Activated naive CD8-positive, alpha-beta T cell treated with anti-CD3 and anti-CD28 coated beads, Interleukin-2, amount 10 ng/mL, durations not matched to agents 7 days and 5 days (primary cell): ENCODE measurements at regions of chr17 and their contacts with region 1.

Region 1: DNA sequence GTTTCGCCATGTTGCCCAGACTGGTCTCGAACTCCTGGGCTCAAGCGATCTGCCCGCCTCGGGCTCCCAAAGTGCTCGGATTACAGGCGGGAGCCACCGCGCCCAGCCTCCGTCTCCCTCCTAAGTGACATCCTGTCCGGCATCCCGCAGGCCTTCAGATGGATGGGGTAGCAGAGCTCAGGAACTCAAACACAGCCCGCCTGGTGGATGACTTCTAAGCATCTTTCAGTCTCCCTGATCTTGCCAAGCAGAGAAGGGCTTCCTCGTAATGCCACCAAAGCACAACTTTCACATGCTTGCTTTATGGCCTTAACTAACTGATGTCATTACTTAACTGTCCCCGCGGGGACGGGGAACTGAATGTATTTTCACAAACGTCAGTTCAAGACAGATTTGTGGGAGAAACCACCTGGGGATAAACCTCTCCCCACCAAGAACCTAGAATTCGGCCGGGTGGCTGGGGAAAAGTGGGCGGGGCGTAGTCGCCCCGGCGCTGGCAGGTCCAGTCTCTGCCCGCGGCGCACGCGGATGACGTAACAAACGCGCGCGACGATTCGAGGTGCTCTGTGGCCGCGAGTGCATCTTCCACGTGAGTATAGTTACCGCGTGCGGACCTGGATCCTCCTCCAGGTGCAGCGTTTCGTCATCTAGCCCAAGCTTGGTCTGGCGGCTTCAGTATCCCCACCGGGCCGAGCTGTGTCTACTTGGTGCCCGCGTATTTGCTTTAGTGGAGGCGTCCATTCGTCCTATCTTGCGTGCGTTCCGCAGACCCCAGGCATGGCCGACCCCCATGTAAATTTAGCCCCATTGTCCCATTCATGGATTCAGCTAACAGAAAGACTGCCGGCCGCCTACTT is at the start of gene PFAS:
- DNase-seq: peak; percentile 99
- ATAC-seq: peak; percentile 68
- H3K4me3 Mint-ChIP-seq: peak within 1 kb of the TSS; percentile 99
- H3K27ac Mint-ChIP-seq: peak within 1 kb of the TSS; percentile 99
- H3K4me1 Mint-ChIP-seq: peaks cover 30% of the 10 kb centered on the region
- H3K27me3 Mint-ChIP-seq: no peaks in the 10 kb centered on the region
- total RNA-seq, gene PFAS: 47.2 to 56.8 TPM

Region 2: DNA sequence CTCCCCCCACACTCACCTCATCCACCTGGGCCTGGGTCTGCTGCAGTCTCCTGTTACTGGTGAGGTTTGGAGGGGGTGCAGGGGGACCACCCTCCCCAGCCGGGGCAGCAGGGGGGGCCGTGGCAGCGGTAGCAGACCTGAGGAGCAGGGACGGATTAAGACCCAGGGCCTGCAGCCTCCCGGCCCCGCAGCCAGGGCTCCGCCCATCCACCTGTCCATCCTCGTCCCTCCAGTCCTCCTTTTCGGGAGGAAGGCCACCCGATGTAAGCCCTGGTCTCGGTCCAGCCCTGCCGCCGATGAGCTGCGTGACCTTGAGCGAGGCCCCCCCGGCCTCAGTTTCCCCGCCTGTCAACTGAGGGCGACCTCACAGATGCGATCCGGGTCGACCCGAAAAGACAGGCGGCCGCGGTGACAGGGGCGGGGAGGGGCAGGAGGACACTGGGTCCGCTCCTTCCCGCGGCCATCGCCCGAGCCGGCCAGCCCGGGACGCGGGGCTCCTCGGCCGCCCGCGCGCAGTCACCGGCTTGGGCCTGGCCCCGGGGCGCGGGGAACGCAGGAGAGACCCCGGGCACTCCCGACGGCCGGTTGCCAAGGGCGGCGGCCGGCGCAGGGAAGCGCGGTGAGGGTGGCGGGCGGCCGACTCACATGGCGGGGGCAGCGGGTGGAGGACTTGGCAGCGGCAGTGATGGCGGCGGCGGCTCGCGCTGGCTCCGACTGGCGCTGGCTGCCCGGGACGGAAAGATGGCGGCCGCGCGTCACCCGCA is 86.6 kb before region 1 on chr17 and contains the start of gene VAMP2:
- POLR2A ChIA-PET with region 1: interaction called, 11 read pairs
- DNase-seq: peak; percentile 95
- ATAC-seq: peak; percentile 41
- H3K4me3 Mint-ChIP-seq: peak within 1 kb of the TSS; percentile 88
- H3K27ac Mint-ChIP-seq: peak within 1 kb of the TSS; percentile 100
- H3K4me1 Mint-ChIP-seq: peaks cover 47% of the 10 kb centered on the region
- H3K27me3 Mint-ChIP-seq: no peaks in the 10 kb centered on the region
- total RNA-seq, gene VAMP2: 116 to 118 TPM

Region 3: DNA sequence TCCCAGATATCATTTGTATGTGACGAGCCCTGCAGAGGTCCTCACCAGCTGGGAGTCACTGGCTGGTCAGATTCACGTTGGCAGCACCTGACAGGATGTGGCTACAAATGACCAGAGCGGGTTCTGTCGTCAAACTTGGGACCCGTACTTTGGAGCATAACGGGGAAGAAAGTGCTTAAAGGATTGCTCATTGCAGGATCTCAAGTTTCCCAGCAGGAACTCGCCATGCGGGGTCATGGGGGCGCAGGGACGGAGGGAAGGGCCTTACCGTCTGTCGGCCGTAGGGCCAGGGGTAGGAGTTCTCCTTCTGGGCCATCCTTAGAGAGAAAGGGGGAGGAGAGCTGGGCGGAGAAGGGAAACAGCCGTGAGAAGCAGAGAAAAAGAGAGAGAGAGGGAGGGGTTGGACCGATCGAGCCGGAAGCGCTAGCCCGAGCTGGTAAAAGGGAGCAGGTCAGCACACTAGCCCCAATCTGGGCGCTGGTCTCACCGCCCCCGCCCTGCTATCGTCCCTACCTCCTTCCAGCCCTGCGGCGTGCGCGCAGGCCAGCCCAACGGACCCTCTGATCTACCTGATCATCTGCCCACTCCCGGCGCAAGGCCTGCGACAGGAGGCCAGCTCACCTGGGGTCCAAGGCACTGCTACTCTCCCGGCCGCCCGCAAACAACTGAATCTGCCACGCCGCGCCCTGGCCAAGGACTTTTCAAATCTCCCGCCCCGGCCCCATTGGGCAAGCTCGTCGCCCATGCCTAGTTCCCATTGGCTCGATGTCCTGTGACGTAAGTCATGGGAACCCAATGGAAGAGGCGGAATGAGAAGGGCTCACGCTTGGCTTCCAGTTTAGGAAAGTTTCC is 38.8 kb before region 1 on chr17 and contains the start of gene AURKB:
- POLR2A ChIA-PET with region 1: interaction called, 12 read pairs
- DNase-seq: peak; percentile 87
- ATAC-seq: peak; percentile 97
- H3K4me3 Mint-ChIP-seq: peak within 1 kb of the TSS; percentile 96
- H3K27ac Mint-ChIP-seq: peak within 1 kb of the TSS; percentile 92
- H3K4me1 Mint-ChIP-seq: peaks cover 27% of the 10 kb centered on the region
- H3K27me3 Mint-ChIP-seq: peaks cover 3% of the 10 kb centered on the region
- total RNA-seq, gene AURKB: 128 to 152 TPM

Region 4: DNA sequence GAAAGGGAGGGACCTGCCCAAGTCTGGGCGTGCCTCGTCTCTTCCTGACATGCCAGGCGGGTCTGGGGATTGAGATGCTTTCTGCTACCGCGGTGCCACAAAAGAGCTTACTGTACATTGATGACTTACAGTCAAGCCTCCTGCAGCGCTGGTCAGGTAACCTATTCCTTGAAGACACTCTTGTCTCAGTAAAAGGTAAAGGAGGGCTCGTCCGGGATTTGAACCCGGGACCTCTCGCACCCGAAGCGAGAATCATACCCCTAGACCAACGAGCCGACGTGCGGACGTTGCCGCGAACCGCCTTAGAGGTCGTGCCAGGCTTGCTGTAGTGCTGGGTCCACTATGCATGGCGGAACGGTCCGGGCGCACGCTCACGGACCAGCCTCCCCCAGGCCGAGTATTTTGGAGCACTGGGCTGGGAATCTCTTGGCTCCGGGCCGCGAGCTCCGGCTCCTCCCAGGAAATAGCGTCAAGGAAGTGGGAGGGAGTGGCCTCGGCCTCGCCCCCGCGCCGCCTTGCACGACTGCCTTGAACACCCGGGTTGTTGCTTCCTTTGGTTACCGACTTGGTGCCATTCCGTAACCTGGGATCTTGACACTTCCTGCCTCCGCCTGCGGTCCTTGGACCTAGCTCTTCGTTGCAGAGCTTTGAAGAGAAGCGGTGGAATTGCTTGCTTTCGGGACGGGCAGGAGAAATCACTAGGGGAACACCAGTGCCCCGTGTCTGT is 26.2 kb before region 1 on chr17:
- POLR2A ChIA-PET with region 1: interaction called, 149 read pairs
- DNase-seq: peak; percentile 90
- ATAC-seq: peak; percentile 40
- H3K4me3 Mint-ChIP-seq: peak overlapping the region; percentile 93
- H3K27ac Mint-ChIP-seq: peak overlapping the region; percentile 95
- H3K4me1 Mint-ChIP-seq: peaks cover 52% of the 10 kb centered on the region
- H3K27me3 Mint-ChIP-seq: peaks cover 2% of the 10 kb centered on the region

Region 5: GRCh38 chr17:8234361-8235270 is 14.4 kb before region 1 on chr17:
- POLR2A ChIA-PET with region 1: interaction called, 11 read pairs
- DNase-seq: no peak
- ATAC-seq: no peak
- H3K4me3 Mint-ChIP-seq: no peak overlapping the region
- H3K27ac Mint-ChIP-seq: no peak overlapping the region
- H3K4me1 Mint-ChIP-seq: peaks cover 5% of the 10 kb centered on the region
- H3K27me3 Mint-ChIP-seq: no peaks in the 10 kb centered on the region

Region 6: DNA sequence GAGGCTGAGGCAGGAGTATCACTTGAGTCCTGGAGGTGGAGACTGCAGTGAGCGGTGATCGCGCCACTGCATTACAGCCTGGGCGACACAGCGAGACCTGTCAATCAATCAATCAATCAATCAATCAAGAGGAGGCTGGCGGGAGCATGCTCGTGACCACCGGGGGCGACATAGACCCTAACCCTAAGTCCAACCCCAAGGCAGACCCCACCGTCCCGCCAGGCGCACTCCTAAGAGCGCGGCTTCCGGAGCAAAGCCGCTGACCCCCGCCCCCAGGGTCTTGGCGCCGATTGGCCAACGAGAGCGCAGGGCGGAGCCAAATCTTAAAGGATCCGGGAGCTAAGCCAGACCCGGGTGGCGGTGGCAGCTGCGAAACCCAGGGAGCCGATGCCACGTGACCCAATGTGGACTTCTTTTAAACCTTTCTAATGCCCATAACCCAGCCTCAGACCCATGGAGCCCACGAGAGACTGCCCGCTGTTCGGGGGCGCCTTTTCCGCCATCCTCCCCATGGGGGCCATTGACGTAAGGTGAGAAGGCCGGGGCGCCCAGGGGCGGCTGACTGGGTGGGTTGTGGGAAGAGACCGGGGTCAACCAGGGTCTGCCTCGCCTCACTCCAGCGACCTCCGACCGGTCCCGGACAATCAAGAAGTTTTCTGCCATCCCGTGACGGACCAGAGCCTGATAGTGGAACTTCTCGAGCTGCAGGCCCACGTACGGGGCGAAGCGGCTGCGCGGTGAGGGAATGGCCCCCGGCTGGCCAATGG is 39.5 kb after region 1 on chr17 and contains the start of gene RANGRF:
- POLR2A ChIA-PET with region 1: interaction called, 31 read pairs
- DNase-seq: peak; percentile 87
- ATAC-seq: peak; percentile 91
- H3K4me3 Mint-ChIP-seq: peak within 1 kb of the TSS; percentile 99
- H3K27ac Mint-ChIP-seq: peak within 1 kb of the TSS; percentile 96
- H3K4me1 Mint-ChIP-seq: peaks cover 31% of the 10 kb centered on the region
- H3K27me3 Mint-ChIP-seq: no peaks in the 10 kb centered on the region
- total RNA-seq, gene RANGRF: 43.6 to 44.9 TPM

Region 7: DNA sequence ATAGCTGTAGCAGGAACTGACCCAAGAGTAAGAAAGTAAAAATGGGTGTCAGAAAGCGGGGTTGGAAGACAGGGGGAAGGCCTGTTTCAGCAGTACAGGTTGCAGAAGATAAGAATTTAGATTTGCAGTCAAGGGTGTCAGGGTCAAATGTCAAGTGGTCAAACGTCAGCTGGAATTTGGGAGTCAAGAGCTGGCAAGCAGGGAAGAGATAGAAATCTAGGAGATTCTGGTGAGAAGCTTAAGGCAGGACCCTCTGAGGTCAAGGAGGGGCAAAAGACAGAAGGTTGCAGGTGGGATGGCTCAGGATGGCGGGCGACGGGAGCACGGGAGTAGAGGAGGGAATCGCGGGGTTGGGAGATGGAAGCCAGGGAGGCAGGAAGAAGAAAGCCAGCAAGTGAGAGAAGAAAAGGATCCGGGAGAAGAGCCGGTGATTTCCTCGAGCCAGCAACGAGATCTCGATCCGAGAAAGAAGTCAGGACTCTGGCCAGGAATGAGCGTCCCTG is 45.9 kb after region 1 on chr17:
- POLR2A ChIA-PET with region 1: interaction called, 52 read pairs
- DNase-seq: no peak
- ATAC-seq: no peak
- H3K4me3 Mint-ChIP-seq: peak overlapping the region; percentile 96
- H3K27ac Mint-ChIP-seq: peak overlapping the region; percentile 92
- H3K4me1 Mint-ChIP-seq: peaks cover 32% of the 10 kb centered on the region
- H3K27me3 Mint-ChIP-seq: no peaks in the 10 kb centered on the region